Keratinocyte (primary cell): ENCODE measurements at regions of chr9 and their contacts with region 1.

Region 1: DNA sequence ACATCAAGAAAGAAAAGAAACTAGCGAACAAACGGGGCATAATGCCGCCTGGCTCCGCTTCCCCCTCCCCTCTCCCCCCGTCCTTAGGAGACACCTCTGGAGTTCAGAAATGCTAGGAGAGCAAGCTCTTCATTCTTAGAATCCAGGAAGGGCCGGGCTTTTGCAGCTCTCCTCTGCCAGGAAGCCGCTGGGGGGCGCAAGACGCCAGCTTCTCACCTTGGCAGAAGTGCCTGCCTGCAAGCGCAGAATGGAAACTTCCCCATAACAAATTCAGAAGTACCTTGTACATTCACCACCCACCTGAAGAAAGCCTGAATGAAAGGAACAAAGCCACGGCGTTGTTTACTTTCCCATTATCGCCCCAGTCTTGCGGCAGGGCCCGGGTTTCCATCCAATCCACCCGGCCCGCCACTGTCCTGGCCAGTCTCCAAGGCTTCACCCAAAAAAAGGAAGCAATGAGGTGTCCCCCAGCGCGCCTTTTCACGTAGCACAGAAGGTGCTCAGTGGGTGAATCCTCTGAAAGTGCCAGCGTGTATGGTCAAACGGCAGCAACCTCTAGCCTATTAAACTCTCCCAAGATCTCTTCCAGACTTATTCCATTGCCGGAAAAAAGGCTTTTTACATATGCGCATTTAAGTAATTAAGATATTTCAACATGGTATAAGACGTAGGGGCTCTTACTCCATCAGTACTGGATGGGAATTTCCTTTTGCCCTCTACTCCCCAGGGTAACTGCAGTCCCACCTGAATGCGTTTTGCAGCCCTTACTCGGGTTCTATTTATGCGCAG is 1.6 kb upstream of the GADD45G start:
- DNase-seq: no peak
- H3K4me3 ChIP-seq: peak overlapping the region in 2 of 3 experiments; percentile 7 to 19
- H3K27ac ChIP-seq: no peak overlapping the region
- H3K4me1 ChIP-seq: peaks cover 29% of the 10 kb centered on the region
- H3K27me3 ChIP-seq: peaks cover 38% of the 10 kb centered on the region
- CTCF ChIP-seq: peak; percentile 79 to 93 (median 81)

Region 2: DNA sequence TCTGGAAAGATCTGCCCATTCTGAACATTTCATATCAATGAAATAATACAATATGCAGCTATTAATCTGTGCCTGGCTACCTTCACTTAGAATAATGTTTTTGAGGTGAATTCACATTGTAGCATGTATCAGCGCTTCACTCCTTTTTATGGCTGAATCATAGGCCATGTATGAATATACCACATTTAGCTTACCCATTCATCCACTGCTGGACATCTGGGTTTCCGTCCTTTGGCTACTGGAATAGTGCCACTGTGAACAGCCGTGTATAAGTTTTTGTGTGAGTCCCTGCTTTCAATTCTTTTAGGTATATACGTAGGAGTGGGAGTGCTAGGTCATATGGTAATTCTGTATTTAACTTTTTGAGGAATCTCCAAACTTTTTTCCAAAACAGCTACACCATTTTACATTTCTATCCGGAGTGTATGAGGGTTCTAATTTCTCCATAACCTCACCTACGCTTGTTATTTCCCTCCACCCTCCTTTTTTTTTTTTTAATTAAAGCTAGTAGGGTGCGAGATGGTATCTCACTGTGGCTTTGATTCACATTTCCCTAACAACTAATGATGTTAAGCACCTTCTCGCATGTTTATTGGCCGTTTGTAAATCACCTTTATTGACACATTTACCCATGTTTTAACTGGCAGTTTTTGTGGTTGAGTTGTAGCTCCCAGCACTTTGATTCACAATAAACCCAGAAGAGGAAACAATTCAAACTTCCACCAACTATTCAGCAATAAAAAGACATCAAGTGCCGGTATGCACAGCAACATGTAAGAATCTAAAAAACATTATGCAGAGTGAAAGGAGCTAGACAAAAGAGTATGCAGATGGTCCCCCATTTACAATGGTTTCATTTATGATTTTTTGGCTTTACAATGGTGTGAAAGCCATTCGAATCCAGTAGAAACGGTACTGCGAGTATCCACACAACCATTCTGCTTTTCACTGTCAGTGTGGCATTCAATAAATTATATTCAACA is 113.3 kb before region 1 on chr9:
- dilution Hi-C with region 1: no loop called
- DNase-seq: no peak
- H3K4me3 ChIP-seq: no peak overlapping the region
- H3K27ac ChIP-seq: no peak overlapping the region
- H3K4me1 ChIP-seq: no peaks in the 10 kb centered on the region
- H3K27me3 ChIP-seq: no peaks in the 10 kb centered on the region
- CTCF ChIP-seq: no peak

Region 3: DNA sequence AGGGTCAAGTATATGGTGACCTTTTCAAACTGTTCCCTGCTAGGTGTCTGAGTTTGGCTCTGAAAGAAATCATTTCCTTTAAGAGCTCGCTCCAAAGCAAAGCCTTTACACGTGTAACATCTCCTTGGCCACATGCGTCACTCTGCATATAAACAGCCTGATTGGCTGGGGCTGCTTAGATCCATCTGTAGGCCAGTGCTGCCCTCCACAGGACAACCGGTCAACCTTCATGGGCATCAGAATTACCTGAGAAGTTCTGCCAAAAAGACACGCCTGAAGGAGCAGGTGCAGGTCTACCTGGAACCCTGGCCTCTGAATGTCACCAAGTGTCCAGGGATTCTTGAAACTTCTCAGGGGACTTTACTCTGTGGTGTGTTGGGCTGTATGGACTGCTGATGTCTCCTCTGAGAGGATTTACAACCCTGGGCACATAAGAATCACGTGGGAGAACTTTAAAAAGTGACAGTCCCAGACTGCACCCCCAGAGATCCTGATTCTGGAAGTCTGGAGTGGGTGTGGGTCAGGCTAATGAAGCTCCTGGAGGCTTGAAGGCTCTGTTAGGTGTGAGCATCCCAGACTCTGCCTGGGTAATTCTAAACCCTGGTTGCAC is 499.2 kb after region 1 on chr9:
- dilution Hi-C with region 1: loop called (anchors 10 kb)
- DNase-seq: peak; percentile 71
- H3K4me3 ChIP-seq: no peak overlapping the region
- H3K27ac ChIP-seq: no peak overlapping the region
- H3K4me1 ChIP-seq: peaks cover 6% of the 10 kb centered on the region
- H3K27me3 ChIP-seq: no peaks in the 10 kb centered on the region
- CTCF ChIP-seq: peak; percentile 72 to 94 (median 89)